GM12878 (cell line): ENCODE measurements at regions of chr22 and their contacts with region 1.

Region 1: DNA sequence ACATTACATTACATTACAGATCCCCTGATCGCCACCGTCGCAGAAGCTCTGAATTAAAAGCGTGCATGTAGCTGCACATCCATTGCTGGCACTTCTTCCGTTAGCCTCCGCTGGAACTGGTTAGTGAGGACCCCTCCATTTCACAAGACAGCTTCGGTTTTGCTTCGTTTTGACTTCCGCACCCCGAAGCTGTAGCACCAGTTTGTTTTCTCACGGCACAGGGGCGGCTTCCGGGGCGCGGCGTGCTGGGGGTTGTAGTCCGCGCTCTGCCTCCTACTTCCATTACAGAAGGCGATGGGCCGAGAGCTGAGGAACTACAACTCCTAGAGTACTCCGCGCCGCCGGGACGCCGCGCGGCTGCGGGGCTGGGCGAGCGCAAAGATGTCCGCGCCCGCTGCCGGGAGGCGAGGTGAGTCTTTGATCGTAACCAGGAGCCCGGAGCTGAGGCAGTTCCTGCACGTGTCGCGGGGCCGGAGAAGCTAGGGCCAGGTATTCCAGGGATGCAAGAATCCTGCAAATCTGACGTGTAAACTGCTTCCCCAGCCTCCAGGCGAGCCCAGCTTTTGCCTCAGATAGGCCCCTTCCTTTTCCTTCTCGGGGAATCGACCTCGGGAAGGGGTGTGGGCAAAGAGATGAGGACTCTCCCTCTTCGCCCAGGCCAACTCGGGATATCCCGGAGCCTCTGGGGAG is at the start of gene PEX26:
- DNase-seq: peak; percentile 84
- ATAC-seq: peak; percentile 96
- H3K4me3 ChIP-seq: peak within 1 kb of the TSS; percentile 92
- H3K27ac ChIP-seq: peak within 1 kb of the TSS; percentile 94
- H3K4me1 ChIP-seq: no peaks in the 10 kb centered on the region
- H3K27me3 ChIP-seq: no peaks in the 10 kb centered on the region
- CTCF ChIP-seq: no peak
- EP300 ChIP-seq: no peak
- POLR2A ChIP-seq: peak; percentile 90
- RAD21 ChIP-seq: no peak
- polyA plus RNA-seq, gene PEX26: 0.79 to 1.1 TPM

Region 2: GRCh38 chr22:17742527-17742902 is 335.3 kb before region 1 on chr22:
- CTCF ChIA-PET with region 1: interaction called, 60 read pairs
- POLR2A ChIA-PET with region 1: no interaction called
- RAD21 ChIA-PET with region 1: interaction called, 20 read pairs
- SMC1A ChIA-PET with region 1: interaction called, 28 read pairs
- in situ Hi-C with region 1: no loop called
- intact Hi-C with region 1: loop called (anchors 1 kb)
- DNase-seq: no peak
- ATAC-seq: peak; percentile 98
- H3K4me3 ChIP-seq: no peak overlapping the region
- H3K27ac ChIP-seq: no peak overlapping the region
- H3K4me1 ChIP-seq: peaks cover 7% of the 10 kb centered on the region
- H3K27me3 ChIP-seq: no peaks in the 10 kb centered on the region
- CTCF ChIP-seq: peak; percentile 84 to 94 (median 90)
- EP300 ChIP-seq: no peak
- POLR2A ChIP-seq: no peak; the same call in 1 of the 2 replicates
- RAD21 ChIP-seq: peak; percentile 98

Region 3: GRCh38 chr22:17797721-17798559 is 279.8 kb before region 1 on chr22:
- CTCF ChIA-PET with region 1: interaction called, 16 read pairs
- POLR2A ChIA-PET with region 1: no interaction called
- RAD21 ChIA-PET with region 1: interaction called, 8 read pairs
- SMC1A ChIA-PET with region 1: interaction called, 9 read pairs
- in situ Hi-C with region 1: no loop called
- intact Hi-C with region 1: no loop called
- DNase-seq: peak; percentile 95
- ATAC-seq: peak; percentile 64
- H3K4me3 ChIP-seq: peak overlapping the region; percentile 63
- H3K27ac ChIP-seq: peak overlapping the region; percentile 100
- H3K4me1 ChIP-seq: peaks cover 86% of the 10 kb centered on the region
- H3K27me3 ChIP-seq: no peaks in the 10 kb centered on the region
- CTCF ChIP-seq: no peak
- EP300 ChIP-seq: peak; percentile 99 to 100
- POLR2A ChIP-seq: peak; percentile 41
- RAD21 ChIP-seq: no peak; the same call in 1 of the 2 replicates

Region 4: DNA sequence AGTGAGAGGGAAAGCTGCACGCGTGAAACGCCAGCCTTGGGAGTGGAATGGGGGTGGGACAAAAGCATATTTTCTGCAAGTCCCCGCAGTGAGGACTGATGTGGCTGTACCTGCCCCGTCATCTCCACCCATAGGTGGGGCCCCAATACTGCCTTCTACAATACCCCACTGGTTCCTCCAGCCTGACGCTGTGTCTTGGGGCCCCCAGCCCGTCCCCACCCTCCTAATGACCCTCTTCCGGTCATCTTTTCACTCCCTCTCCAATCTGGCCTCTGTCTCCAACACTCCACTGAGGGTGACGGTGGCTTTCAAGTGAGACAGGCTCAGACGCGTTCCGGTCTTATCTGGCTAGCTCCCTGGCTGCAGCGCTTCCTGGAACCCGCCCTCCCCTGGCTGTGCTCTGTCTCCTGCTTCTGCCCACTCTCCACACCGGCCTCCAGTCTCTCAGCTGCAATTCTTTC is 157.6 kb before region 1 on chr22:
- CTCF ChIA-PET with region 1: interaction called, 25 read pairs
- POLR2A ChIA-PET with region 1: no interaction called
- RAD21 ChIA-PET with region 1: interaction called, 9 read pairs
- SMC1A ChIA-PET with region 1: interaction called, 9 read pairs
- in situ Hi-C with region 1: no loop called
- intact Hi-C with region 1: no loop called
- DNase-seq: no peak
- ATAC-seq: peak; percentile 47
- H3K4me3 ChIP-seq: no peak overlapping the region
- H3K27ac ChIP-seq: no peak overlapping the region
- H3K4me1 ChIP-seq: peaks cover 23% of the 10 kb centered on the region
- H3K27me3 ChIP-seq: no peaks in the 10 kb centered on the region
- CTCF ChIP-seq: peak in 2 of 3 experiments; percentile 13 to 20; a peak in 2 of 6 replicates
- EP300 ChIP-seq: no peak
- POLR2A ChIP-seq: no peak
- RAD21 ChIP-seq: no peak

Region 5: GRCh38 chr22:18057568-18058209 is 20.1 kb before region 1 on chr22:
- CTCF ChIA-PET with region 1: interaction called, 75 read pairs
- POLR2A ChIA-PET with region 1: interaction called, 27 read pairs
- RAD21 ChIA-PET with region 1: interaction called, 78 read pairs
- SMC1A ChIA-PET with region 1: interaction called, 86 read pairs
- in situ Hi-C with region 1: no loop called
- intact Hi-C with region 1: no loop called
- DNase-seq: peak; percentile 68
- ATAC-seq: peak; percentile 84
- H3K4me3 ChIP-seq: peak overlapping the region; percentile 48; the same call in 1 of the 2 replicates
- H3K27ac ChIP-seq: peak overlapping the region; percentile 49; the same call in 1 of the 2 replicates
- H3K4me1 ChIP-seq: peaks cover 30% of the 10 kb centered on the region
- H3K27me3 ChIP-seq: no peaks in the 10 kb centered on the region
- CTCF ChIP-seq: no peak
- EP300 ChIP-seq: peak; percentile 29 to 49; a peak in 2 of 4 replicates
- POLR2A ChIP-seq: no peak
- RAD21 ChIP-seq: no peak

Region 6: DNA sequence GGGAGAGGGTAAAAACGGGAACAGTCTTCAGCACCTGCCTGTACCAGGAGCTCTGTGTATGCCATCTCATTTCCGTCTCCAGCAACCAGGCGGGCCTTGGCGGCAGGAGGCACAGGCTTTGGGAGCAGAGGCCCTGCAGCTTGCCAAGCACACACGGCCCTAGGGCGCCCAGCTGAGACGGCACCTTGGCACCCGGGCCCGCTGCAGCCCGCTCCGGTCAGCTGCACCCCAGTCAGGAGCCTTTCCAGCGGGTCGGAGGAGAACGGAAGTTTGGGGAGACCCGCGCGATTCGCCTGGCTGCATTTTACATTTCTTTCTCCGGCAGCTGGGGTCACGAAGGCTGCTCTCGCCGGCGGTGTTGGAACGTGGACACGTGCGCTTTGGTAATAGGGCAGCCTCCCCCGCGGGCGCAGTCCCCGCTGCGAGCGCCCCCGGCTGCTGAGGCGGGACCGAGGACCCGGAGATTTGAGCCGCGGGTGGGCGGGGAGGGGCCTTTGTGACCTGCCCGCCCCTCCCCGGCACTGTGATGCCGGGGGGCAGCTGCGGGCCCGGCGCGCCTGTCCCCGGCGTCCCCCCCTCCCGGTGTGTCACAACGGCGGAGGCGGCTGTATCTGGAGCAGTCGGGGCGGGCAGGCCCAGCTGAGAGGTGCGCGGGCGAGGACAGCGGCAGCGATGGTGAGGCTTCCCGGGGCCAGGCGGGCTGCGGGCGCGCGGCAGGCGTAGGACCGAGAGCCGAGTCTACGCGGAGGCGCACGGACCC is 32.6 kb after region 1 on chr22 and contains the start of gene TUBA8:
- CTCF ChIA-PET with region 1: interaction called, 36 read pairs
- POLR2A ChIA-PET with region 1: interaction called, 8 read pairs
- RAD21 ChIA-PET with region 1: interaction called, 34 read pairs
- SMC1A ChIA-PET with region 1: interaction called, 31 read pairs
- in situ Hi-C with region 1: no loop called
- intact Hi-C with region 1: loop called (anchors 1 kb)
- DNase-seq: no peak
- ATAC-seq: peak; percentile 64
- H3K4me3 ChIP-seq: peak within 1 kb of the TSS; percentile 65
- H3K27ac ChIP-seq: peak within 1 kb of the TSS; percentile 67
- H3K4me1 ChIP-seq: peaks cover 41% of the 10 kb centered on the region
- H3K27me3 ChIP-seq: no peaks in the 10 kb centered on the region; a peak in 1 of 4 replicates
- CTCF ChIP-seq: peak in 1 of 3 experiments; percentile 16; a peak in 1 of 6 replicates
- EP300 ChIP-seq: no peak
- POLR2A ChIP-seq: peak; percentile 73
- RAD21 ChIP-seq: 0 out of 2 replicates have a peak, but pooled peaks have one; percentile 8
- polyA plus RNA-seq, gene TUBA8: 2.2 to 5.5 TPM